Naive thymus-derived CD4-positive, alpha-beta T cell (primary cell): ENCODE measurements at regions of chr12 and their contacts with region 1.

Region 1: GRCh38 chr12:48105862-48106680 is at the start of gene SENP1:
- DNase-seq: peak; percentile 81 to 93 (median 90)
- ATAC-seq: peak; percentile 88
- H3K4me3 ChIP-seq: peak within 1 kb of the TSS; percentile 89
- H3K4me3 Mint-ChIP-seq: peak within 1 kb of the TSS; percentile 88 to 96 (median 92)
- H3K27ac ChIP-seq: peak within 1 kb of the TSS; percentile 93
- H3K27ac Mint-ChIP-seq: peak within 1 kb of the TSS; percentile 90 to 100 (median 95)
- H3K4me1 ChIP-seq: peaks cover 17 to 25% of the 10 kb centered on the region in 2 donors
- H3K4me1 Mint-ChIP-seq: peaks cover 33 to 65% (median 58%) of the 10 kb centered on the region in 7 donors
- H3K27me3 ChIP-seq: no peaks in the 10 kb centered on the region
- H3K27me3 Mint-ChIP-seq: peaks cover 0 to 8% (median 0%) of the 10 kb centered on the region in 5 donors
- total RNA-seq, gene SENP1: 16.9 to 41.9 (median 31.5) TPM

Region 2: GRCh38 chr12:47705566-47706425 is 400.3 kb before region 1 on chr12 and contains the start of gene RPAP3:
- CTCF ChIA-PET with region 1: no interaction called
- POLR2A ChIA-PET with region 1: no interaction called
- intact Hi-C with region 1: loop called (anchors 2 to 10 kb)
- DNase-seq: peak; percentile 91 to 99 (median 95)
- ATAC-seq: peak; percentile 97
- H3K4me3 ChIP-seq: peak within 1 kb of the TSS; percentile 59
- H3K4me3 Mint-ChIP-seq: peak within 1 kb of the TSS; percentile 92 to 99 (median 98)
- H3K27ac ChIP-seq: peak within 1 kb of the TSS; percentile 85
- H3K27ac Mint-ChIP-seq: peak within 1 kb of the TSS; percentile 93 to 99 (median 97)
- H3K4me1 ChIP-seq: peaks cover 21 to 27% of the 10 kb centered on the region in 2 donors
- H3K4me1 Mint-ChIP-seq: peaks cover 48 to 73% (median 63%) of the 10 kb centered on the region in 7 donors
- H3K27me3 ChIP-seq: no peaks in the 10 kb centered on the region
- H3K27me3 Mint-ChIP-seq: no peaks in the 10 kb centered on the region
- total RNA-seq, gene RPAP3: 28.5 to 51.3 (median 43.9) TPM

Region 3: GRCh38 chr12:47867495-47867941 is 238.6 kb before region 1 on chr12:
- CTCF ChIA-PET with region 1: no interaction called
- POLR2A ChIA-PET with region 1: no interaction called
- intact Hi-C with region 1: no loop called
- DNase-seq: peak in 1 of 9 donors; percentile 58
- ATAC-seq: peak; percentile 13
- H3K4me3 ChIP-seq: no peak overlapping the region
- H3K4me3 Mint-ChIP-seq: peak overlapping the region in 1 of 10 donors; percentile 74
- H3K27ac ChIP-seq: no peak overlapping the region
- H3K27ac Mint-ChIP-seq: peak overlapping the region in 1 of 9 donors; percentile 90
- H3K4me1 ChIP-seq: no peaks in the 10 kb centered on the region
- H3K4me1 Mint-ChIP-seq: peaks cover 0 to 91% (median 0%) of the 10 kb centered on the region in 7 donors
- H3K27me3 ChIP-seq: no peaks in the 10 kb centered on the region
- H3K27me3 Mint-ChIP-seq: no peaks in the 10 kb centered on the region

Region 4: GRCh38 chr12:47878918-47879481 is 227.1 kb before region 1 on chr12:
- CTCF ChIA-PET with region 1: no interaction called
- POLR2A ChIA-PET with region 1: no interaction called
- intact Hi-C with region 1: no loop called
- DNase-seq: no peak
- ATAC-seq: no peak
- H3K4me3 ChIP-seq: no peak overlapping the region
- H3K4me3 Mint-ChIP-seq: no peak overlapping the region
- H3K27ac ChIP-seq: no peak overlapping the region
- H3K27ac Mint-ChIP-seq: no peak overlapping the region
- H3K4me1 ChIP-seq: peaks cover 8 to 21% of the 10 kb centered on the region in 2 donors
- H3K4me1 Mint-ChIP-seq: peaks cover 22 to 70% (median 28%) of the 10 kb centered on the region in 7 donors
- H3K27me3 ChIP-seq: no peaks in the 10 kb centered on the region
- H3K27me3 Mint-ChIP-seq: no peaks in the 10 kb centered on the region

Region 5: DNA sequence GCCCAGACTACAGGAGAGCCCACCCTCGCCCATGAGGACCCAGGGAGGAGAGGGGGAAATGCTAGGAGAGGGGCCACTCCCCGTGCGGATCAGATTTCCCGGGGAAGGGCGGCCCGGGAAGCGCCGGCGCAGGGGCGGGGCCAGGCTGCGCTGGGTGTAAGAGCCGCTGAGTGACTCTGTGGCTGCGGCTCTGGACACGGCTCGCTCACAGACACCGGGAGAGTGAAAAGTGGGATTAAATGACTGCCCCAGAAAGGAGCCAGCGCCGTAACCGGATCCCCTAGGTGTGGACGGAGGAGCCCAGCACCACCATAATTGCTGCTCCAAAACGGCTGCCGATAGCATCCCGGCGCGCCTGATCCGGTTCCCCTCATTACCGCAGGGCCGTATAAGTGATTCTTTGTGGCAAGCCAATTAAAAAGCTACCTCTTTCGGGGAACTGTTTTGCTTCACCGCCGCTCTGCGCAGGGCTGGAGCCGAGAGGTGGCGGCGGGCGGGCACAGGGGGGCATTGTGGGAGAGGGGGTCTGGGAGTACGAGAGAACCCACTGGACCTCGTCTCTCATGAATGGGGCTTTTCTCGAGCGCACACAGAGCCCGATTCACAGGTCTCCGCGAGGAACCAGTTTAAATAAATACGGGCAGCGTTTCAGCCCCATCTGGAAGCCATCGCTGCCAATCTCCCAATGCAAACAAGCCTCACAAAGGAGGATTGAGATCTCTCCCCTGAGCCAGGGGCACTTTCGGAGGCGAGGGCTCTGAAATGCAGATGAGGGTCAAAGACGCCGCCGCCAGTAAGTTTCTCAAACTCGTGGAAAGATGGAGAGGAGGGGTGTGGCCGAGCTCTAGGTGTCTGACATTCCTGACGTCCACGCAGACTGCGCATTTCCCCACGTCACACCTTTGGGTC is 104.3 kb before region 1 on chr12:
- CTCF ChIA-PET with region 1: no interaction called
- POLR2A ChIA-PET with region 1: no interaction called
- intact Hi-C with region 1: loop called in 1 of 2 experiments (anchors 5 kb)
- DNase-seq: peak in 3 of 9 donors; percentile 15 to 41 (median 18)
- ATAC-seq: peak; percentile 30
- H3K4me3 ChIP-seq: peak overlapping the region; percentile 15
- H3K4me3 Mint-ChIP-seq: peak overlapping the region; percentile 76 to 90 (median 80)
- H3K27ac ChIP-seq: no peak overlapping the region
- H3K27ac Mint-ChIP-seq: peak overlapping the region in 2 of 9 donors; percentile 21 to 72
- H3K4me1 ChIP-seq: peaks cover 34 to 45% of the 10 kb centered on the region in 2 donors
- H3K4me1 Mint-ChIP-seq: peaks cover 21 to 43% (median 39%) of the 10 kb centered on the region in 7 donors
- H3K27me3 ChIP-seq: peaks cover 25 to 44% of the 10 kb centered on the region in 2 donors
- H3K27me3 Mint-ChIP-seq: peaks cover 76 to 96% (median 83%) of the 10 kb centered on the region in 5 donors

Region 6: GRCh38 chr12:48157018-48157888 is 51.2 kb after region 1 on chr12 and contains the start of gene ASB8:
- CTCF ChIA-PET with region 1: interaction called, 3 read pairs
- POLR2A ChIA-PET with region 1: interaction called, 56 read pairs
- intact Hi-C with region 1: loop called (anchors 1 kb)
- DNase-seq: peak; percentile 95 to 99 (median 98)
- ATAC-seq: peak; percentile 98
- H3K4me3 ChIP-seq: peak within 1 kb of the TSS; percentile 97
- H3K4me3 Mint-ChIP-seq: peak within 1 kb of the TSS; percentile 90 to 99 (median 97)
- H3K27ac ChIP-seq: peak within 1 kb of the TSS; percentile 84
- H3K27ac Mint-ChIP-seq: peak within 1 kb of the TSS; percentile 95 to 99 (median 99)
- H3K4me1 ChIP-seq: peaks cover 8 to 20% of the 10 kb centered on the region in 2 donors
- H3K4me1 Mint-ChIP-seq: peaks cover 22 to 65% (median 56%) of the 10 kb centered on the region in 7 donors
- H3K27me3 ChIP-seq: no peaks in the 10 kb centered on the region
- H3K27me3 Mint-ChIP-seq: peaks cover 0 to 5% (median 0%) of the 10 kb centered on the region in 5 donors
- total RNA-seq, gene ASB8: 42.9 to 75.9 (median 54.9) TPM

Region 7: DNA sequence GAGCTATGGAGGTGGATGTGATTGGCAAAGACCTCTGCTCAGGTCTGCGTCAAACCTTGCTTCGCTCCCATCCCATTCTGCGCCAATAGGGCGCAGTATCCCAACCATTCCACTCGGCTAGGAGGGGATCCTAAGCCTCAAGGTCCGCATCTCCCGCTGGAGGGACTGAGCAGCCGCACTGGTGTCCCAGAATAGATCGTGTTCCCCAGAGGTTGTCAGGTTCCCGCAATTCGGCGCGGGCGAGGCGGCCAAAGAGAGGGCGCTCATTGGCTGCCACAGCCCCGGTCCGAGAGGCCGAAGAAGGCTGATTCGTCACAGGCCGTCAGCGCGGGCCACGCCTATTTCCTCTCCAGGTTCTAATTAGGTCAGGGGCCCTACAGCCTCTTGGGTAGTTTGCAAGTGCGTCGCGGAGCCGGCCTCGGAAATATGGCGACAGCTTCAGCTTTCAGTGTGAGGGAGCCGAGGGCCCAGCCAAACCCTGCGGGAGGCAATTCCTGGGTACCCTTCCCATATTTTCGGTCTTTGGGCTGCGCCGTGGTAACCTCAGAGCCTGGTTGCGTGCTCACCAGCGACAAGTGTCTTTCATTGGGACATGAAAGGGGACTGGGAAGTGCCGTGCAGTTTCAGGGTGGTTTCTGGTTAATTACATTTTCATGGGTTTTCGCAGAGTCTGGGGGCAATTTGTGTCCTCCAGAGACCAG is 92.0 kb after region 1 on chr12:
- CTCF ChIA-PET with region 1: interaction called, 4 read pairs
- POLR2A ChIA-PET with region 1: interaction called, 8 read pairs
- intact Hi-C with region 1: loop called (anchors 1 kb)
- DNase-seq: peak; percentile 75 to 88 (median 86)
- ATAC-seq: peak; percentile 97
- H3K4me3 ChIP-seq: peak overlapping the region; percentile 89
- H3K4me3 Mint-ChIP-seq: peak overlapping the region; percentile 83 to 96 (median 92)
- H3K27ac ChIP-seq: peak overlapping the region; percentile 98
- H3K27ac Mint-ChIP-seq: peak overlapping the region; percentile 94 to 99 (median 96)
- H3K4me1 ChIP-seq: peaks cover 28% of the 10 kb centered on the region in 2 donors
- H3K4me1 Mint-ChIP-seq: peaks cover 31 to 53% (median 48%) of the 10 kb centered on the region in 7 donors
- H3K27me3 ChIP-seq: no peaks in the 10 kb centered on the region
- H3K27me3 Mint-ChIP-seq: peaks cover 0 to 28% (median 0%) of the 10 kb centered on the region in 5 donors

Region 8: DNA sequence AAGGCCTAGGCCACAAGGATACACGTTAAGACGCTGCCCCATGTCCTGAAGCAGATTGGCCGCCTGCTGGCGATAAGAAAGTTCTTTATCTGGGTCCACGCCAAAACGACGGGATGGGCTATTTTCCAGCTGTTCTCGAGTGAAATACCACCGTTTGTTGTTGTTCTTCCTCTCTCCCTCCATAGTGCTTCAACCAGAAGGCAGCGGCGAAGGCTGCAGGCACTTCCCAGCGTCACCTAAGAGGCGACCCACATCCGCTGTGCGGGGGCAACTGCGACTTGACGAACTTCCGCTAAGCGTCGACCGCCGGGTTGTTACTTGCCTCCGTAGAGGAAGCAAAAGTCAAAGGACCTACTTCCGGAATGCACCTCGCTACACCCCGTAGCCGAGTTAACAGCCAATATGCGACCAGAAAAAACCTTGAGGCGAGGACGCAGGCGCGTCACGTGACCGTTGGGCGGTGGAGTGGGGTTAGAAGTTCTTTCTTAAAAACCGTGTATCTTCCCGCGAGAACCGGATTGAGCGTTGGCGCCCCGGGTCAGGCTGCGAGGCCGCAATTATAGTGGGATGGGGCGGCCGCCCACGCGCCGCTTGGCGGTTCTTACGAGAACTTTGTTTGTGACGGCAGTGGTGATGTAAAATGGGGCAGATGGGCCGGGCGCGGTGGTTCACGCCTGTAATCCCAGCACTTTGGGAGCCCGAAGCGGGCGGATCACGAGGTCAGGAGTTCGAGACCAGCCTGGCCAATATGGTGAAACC is 610.6 kb after region 1 on chr12 and contains the start of gene CCNT1:
- CTCF ChIA-PET with region 1: no interaction called
- POLR2A ChIA-PET with region 1: interaction called, 5 read pairs
- intact Hi-C with region 1: loop called (anchors 1 to 5 kb)
- DNase-seq: peak; percentile 90 to 100 (median 99)
- ATAC-seq: peak; percentile 93
- H3K4me3 ChIP-seq: peak within 1 kb of the TSS; percentile 88
- H3K4me3 Mint-ChIP-seq: peak within 1 kb of the TSS; percentile 89 to 98 (median 94)
- H3K27ac ChIP-seq: peak within 1 kb of the TSS; percentile 95
- H3K27ac Mint-ChIP-seq: peak within 1 kb of the TSS; percentile 95 to 99 (median 98)
- H3K4me1 ChIP-seq: peaks cover 14 to 24% of the 10 kb centered on the region in 2 donors
- H3K4me1 Mint-ChIP-seq: peaks cover 21 to 50% (median 37%) of the 10 kb centered on the region in 7 donors
- H3K27me3 ChIP-seq: no peaks in the 10 kb centered on the region
- H3K27me3 Mint-ChIP-seq: peaks cover 0 to 4% (median 0%) of the 10 kb centered on the region in 5 donors
- total RNA-seq, gene CCNT1: 62.5 to 127 (median 76.6) TPM